ENCODE measurements at regions of chr1 and their contacts with region 1.

Region 1: GRCh38 chr1:155029513-155030242 is 3.9 kb downstream of the DCST2 start:
- DNase-seq: no peak
- H3K4me3 ChIP-seq: no peak overlapping the region
- H3K27ac ChIP-seq: no peak overlapping the region
- H3K4me1 ChIP-seq: peaks cover 0 to 1% (median 0%) of the 10 kb centered on the region in 4 experiments
- H3K27me3 ChIP-seq: no peaks in the 10 kb centered on the region

Region 2: GRCh38 chr1:154863315-154864174 is 166.1 kb before region 1 on chr1:
- CTCF ChIA-PET with region 1: no interaction called
- POLR2A ChIA-PET with region 1: no interaction called
- DNase-seq: no peak
- H3K4me3 ChIP-seq: no peak overlapping the region
- H3K27ac ChIP-seq: no peak overlapping the region
- H3K4me1 ChIP-seq: peaks cover 0 to 31% (median 10%) of the 10 kb centered on the region in 4 experiments
- H3K27me3 ChIP-seq: peaks cover 0 to 24% (median 10%) of the 10 kb centered on the region in 5 experiments

Region 3: GRCh38 chr1:154955718-154956543 is 73.7 kb before region 1 on chr1 and contains the start of gene PBXIP1:
- CTCF ChIA-PET with region 1: no interaction called
- POLR2A ChIA-PET with region 1: no interaction called
- DNase-seq: peak; percentile 94 to 96 (median 94)
- H3K4me3 ChIP-seq: peak within 1 kb of the TSS; percentile 33 to 92 (median 81)
- H3K27ac ChIP-seq: peak within 1 kb of the TSS; percentile 100
- H3K4me1 ChIP-seq: peaks cover 29 to 74% (median 69%) of the 10 kb centered on the region in 4 experiments
- H3K27me3 ChIP-seq: no peaks in the 10 kb centered on the region

Region 4: DNA sequence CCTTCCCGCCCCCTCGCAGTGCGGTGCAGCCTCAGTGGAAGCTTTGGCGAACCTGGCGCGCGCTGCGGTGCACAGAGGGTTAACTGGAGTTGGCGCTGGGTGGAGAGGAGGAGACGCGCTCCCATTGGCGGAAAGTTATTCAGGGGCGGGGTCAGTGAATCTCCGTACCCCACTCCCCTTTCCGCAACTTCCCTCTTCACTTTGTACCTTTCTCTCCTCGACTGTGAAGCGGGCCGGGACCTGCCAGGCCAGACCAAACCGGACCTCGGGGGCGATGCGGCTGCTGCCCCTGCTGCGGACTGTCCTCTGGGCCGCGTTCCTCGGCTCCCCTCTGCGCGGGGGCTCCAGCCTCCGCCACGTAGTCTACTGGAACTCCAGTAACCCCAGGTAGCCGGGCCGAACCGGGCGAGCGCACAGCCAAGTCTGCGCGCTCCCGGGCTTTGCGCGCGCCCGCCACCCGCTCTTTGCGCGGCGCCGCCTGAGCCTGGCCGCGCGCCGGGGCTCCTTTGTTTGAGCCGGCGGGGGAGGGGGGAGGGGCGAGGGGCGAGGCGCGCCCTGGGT is 34.0 kb after region 1 on chr1 and contains the start of gene EFNA4:
- CTCF ChIA-PET with region 1: interaction called, 20 read pairs
- POLR2A ChIA-PET with region 1: no interaction called
- DNase-seq: peak; percentile 88 to 95 (median 95)
- H3K4me3 ChIP-seq: peak within 1 kb of the TSS; percentile 44 to 88 (median 76)
- H3K27ac ChIP-seq: peak within 1 kb of the TSS in 1 of 2 experiments; percentile 34
- H3K4me1 ChIP-seq: peaks cover 0 to 29% (median 27%) of the 10 kb centered on the region in 4 experiments
- H3K27me3 ChIP-seq: no peaks in the 10 kb centered on the region

Measured in common myeloid progenitor, CD34-positive (primary cell).